MCF 10A (cell line): ENCODE measurements at regions of chr1 and their contacts with region 1.

Region 1: GRCh38 chr1:88029142-88029541 is 654.9 kb upstream of the PKN2 start:
- DNase-seq: no peak
- H3K4me3 Mint-ChIP-seq: no peak overlapping the region
- H3K27ac Mint-ChIP-seq: no peak overlapping the region
- H3K4me1 Mint-ChIP-seq: no peaks in the 10 kb centered on the region
- H3K27me3 Mint-ChIP-seq: no peaks in the 10 kb centered on the region
- CTCF ChIP-seq: no peak

Region 2: GRCh38 chr1:88001460-88001859 is 27.7 kb before region 1 on chr1:
- CTCF ChIA-PET with region 1: no interaction called
- POLR2A ChIA-PET with region 1: no interaction called
- intact Hi-C with region 1: loop called (anchors 2 kb)
- DNase-seq: peak; percentile 11
- H3K4me3 Mint-ChIP-seq: no peak overlapping the region
- H3K27ac Mint-ChIP-seq: no peak overlapping the region
- H3K4me1 Mint-ChIP-seq: peaks cover 7% of the 10 kb centered on the region
- H3K27me3 Mint-ChIP-seq: no peaks in the 10 kb centered on the region
- CTCF ChIP-seq: no peak